ENCODE measurements at regions of chr6 and their contacts with region 1.

Region 1: GRCh38 chr6:3410385-3411360 is 46.2 kb downstream of the SLC22A23 start:
- DNase-seq: peak in 1 of 2 experiments; percentile 92
- H3K4me3 ChIP-seq: no peak overlapping the region
- H3K27ac ChIP-seq: no peak overlapping the region
- H3K4me1 ChIP-seq: peaks cover 0 to 19% (median 16%) of the 10 kb centered on the region in 4 experiments; a peak in 6 of 7 replicates
- H3K27me3 ChIP-seq: no peaks in the 10 kb centered on the region
- CTCF ChIP-seq: peak; percentile 84 to 95 (median 84)
- EP300 ChIP-seq: no peak
- POLR2A ChIP-seq: no peak
- RAD21 ChIP-seq: peak; percentile 83 to 88

Region 2: DNA sequence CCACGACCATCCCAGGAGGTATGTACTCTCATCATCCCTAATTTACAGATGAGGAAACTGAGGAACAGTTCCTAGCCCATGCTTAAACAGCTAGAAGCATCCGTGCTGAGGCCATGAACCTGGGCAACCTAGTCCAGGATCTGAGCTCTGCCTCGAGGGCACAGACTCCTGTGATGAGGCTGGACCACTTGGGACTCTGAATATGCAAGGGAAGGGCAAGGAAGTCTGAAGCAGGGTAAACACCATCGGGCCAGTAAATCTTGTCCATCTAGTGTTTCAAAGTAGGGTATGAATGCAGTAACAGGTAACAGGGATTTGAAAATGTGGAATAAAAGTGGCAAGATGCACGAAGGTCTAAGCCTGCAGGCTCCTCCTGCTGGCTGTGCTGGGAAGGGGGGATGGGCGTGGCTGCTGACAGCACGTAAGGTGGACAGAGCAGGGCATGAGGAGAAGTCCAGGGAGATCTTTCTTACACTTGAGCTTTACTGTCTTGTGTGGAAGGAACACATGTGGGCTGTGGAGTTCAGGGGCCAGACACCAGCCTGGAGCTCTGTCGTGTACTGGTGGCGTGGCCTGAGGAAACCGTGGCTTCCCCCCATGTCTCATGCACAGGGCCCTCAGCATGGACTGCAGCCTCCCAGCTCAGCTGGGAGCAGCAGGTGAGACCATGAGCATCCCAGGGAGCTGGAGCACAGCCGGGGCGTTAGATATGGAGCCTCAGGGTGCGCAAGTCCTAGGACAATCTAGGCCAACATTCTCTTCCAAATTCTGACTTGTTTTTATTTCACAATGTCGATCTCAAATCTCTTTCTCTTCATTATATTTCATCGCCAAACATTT is 38.4 kb before region 1 on chr6:
- CTCF ChIA-PET with region 1: interaction called, 15 read pairs
- POLR2A ChIA-PET with region 1: no interaction called
- DNase-seq: no peak
- H3K4me3 ChIP-seq: no peak overlapping the region
- H3K27ac ChIP-seq: no peak overlapping the region
- H3K4me1 ChIP-seq: peaks cover 0 to 5% (median 3%) of the 10 kb centered on the region in 4 experiments; a peak in 4 of 7 replicates
- H3K27me3 ChIP-seq: peaks cover 0 to 2% (median 0%) of the 10 kb centered on the region in 4 experiments; a peak in 1 of 7 replicates
- CTCF ChIP-seq: peak; percentile 31 to 67 (median 60)
- EP300 ChIP-seq: no peak
- POLR2A ChIP-seq: no peak
- RAD21 ChIP-seq: peak; percentile 46 to 49

Region 3: GRCh38 chr6:3421791-3422434 is 11.2 kb after region 1 on chr6:
- CTCF ChIA-PET with region 1: interaction called, 23 read pairs
- POLR2A ChIA-PET with region 1: interaction called, 3 read pairs
- DNase-seq: no peak
- H3K4me3 ChIP-seq: no peak overlapping the region
- H3K27ac ChIP-seq: peak overlapping the region; percentile 35; the same call in 1 of the 2 replicates
- H3K4me1 ChIP-seq: peaks cover 31 to 57% (median 43%) of the 10 kb centered on the region in 4 experiments
- H3K27me3 ChIP-seq: no peaks in the 10 kb centered on the region
- CTCF ChIP-seq: no peak
- EP300 ChIP-seq: no peak
- POLR2A ChIP-seq: no peak
- RAD21 ChIP-seq: no peak

Region 4: DNA sequence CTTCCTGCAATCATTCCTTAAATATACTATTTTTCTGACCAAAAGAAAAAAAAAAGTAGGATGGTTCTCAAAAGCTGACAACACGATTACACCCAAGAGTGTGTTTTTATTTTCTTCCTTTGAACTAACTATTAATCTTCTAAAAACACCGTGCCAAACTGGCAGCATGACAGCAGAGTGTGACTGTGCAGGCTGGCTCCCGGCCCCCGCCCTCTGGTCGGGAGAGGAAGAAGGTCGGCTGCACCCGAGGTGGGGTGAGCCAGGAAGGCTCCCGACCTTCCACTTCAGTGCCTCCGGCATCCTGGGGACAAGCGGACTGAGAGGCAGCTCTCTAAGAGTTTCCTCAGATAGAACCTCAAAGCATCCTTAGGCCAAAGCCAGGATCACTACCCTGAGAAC is 17.0 kb after region 1 on chr6:
- CTCF ChIA-PET with region 1: interaction called, 23 read pairs
- POLR2A ChIA-PET with region 1: interaction called, 3 read pairs
- DNase-seq: no peak
- H3K4me3 ChIP-seq: no peak overlapping the region
- H3K27ac ChIP-seq: no peak overlapping the region
- H3K4me1 ChIP-seq: peaks cover 16 to 29% (median 24%) of the 10 kb centered on the region in 4 experiments
- H3K27me3 ChIP-seq: no peaks in the 10 kb centered on the region
- CTCF ChIP-seq: no peak
- EP300 ChIP-seq: no peak
- POLR2A ChIP-seq: no peak
- RAD21 ChIP-seq: no peak

Region 5: DNA sequence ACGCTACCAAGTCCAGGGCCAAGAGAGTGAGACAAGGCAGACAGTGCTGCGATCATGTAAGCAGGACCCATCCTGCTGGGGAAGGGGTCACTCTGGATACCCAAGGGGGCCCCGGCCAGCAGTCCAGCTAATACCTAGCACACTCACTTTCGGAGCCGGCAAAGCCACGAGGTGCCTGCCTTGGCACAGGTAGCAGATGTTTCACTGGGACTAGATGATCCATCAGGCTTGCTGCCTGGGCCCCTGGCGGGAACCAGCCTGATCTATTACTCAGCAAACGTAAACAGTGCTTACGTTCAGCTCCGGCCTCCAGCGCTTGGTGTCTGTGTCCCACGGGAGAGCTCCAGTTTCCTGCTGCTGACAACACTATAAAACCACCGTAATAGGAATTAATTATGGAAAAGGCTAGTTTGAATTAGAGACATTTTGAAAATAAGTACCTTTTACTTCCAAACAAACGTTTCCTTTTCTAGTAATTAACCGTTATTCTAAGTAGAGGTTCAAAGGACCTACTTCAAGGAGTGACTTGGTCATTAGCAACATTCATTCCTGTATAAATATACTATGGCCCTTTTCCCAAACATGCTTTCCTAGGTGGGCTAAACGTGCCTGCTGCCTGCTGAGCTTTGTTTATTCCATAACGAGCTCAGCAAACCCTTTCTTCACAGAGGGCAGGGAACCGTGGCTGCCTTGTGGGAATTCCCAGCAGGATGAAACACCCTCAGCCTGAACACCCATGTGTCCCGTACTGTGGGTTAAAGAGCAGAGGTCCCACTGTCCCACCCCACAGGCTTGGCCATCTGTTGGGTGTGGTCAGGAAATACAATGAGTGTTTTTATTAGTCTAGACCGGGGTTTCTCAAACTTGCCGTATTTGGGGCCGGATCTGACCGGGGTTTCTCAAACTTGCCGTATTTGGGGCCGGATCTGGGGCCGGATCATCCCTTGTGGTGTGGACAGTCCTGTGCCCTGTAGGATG is 27.8 kb after region 1 on chr6:
- CTCF ChIA-PET with region 1: interaction called, 31 read pairs
- POLR2A ChIA-PET with region 1: no interaction called
- DNase-seq: no peak
- H3K4me3 ChIP-seq: no peak overlapping the region
- H3K27ac ChIP-seq: no peak overlapping the region; the same call in 1 of the 2 replicates
- H3K4me1 ChIP-seq: peaks cover 0 to 4% (median 0%) of the 10 kb centered on the region in 4 experiments; a peak in 2 of 7 replicates
- H3K27me3 ChIP-seq: no peaks in the 10 kb centered on the region
- CTCF ChIP-seq: no peak
- EP300 ChIP-seq: no peak
- POLR2A ChIP-seq: no peak
- RAD21 ChIP-seq: no peak

Region 6: DNA sequence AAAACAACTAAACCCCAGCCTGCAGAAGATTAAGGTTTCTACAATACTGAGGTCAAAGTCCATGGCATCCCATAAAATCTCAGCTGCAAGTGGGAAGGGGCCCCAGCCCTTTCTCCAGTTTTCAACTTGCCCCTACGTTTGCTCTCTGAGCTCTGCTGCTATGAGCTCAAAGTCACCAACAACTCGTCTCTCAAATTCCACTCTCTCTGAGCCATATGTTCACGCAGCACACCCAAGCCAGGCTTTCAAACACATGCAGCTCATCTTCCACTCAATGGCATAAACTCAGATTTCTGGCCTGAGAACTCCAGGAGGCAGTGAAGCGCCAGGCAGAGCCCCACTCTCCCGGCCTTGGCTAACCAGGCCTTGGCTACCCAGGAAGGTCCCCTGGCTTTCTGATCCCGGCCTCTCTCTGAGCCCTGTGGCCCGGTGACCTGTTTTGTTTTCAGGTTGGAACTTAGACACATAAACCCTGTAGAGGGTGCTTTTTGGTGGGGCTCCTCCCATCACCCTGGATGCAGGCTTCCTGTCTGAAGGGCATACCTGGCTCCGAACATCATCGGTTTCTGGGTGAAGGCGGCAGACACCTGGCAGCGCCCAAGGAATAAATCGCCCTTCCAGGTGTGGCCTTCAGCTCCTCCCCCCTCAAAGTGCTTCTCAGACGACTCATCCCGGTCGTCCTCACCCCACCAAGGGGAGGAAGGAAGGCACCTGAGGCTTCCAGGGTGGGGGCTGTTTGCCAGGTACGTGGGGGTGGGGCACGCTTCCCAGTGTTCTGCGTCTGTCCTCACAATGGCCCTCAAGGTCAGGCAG is 33.8 kb after region 1 on chr6:
- CTCF ChIA-PET with region 1: interaction called, 31 read pairs
- POLR2A ChIA-PET with region 1: no interaction called
- DNase-seq: peak in 1 of 2 experiments; percentile 27
- H3K4me3 ChIP-seq: no peak overlapping the region
- H3K27ac ChIP-seq: no peak overlapping the region; the same call in 1 of the 2 replicates
- H3K4me1 ChIP-seq: peaks cover 2 to 10% (median 8%) of the 10 kb centered on the region in 4 experiments; a peak in 6 of 7 replicates
- H3K27me3 ChIP-seq: no peaks in the 10 kb centered on the region
- CTCF ChIP-seq: no peak
- EP300 ChIP-seq: no peak
- POLR2A ChIP-seq: no peak
- RAD21 ChIP-seq: 0 out of 4 replicates have a peak, but pooled peaks of 1 of the 2 experiments have one; percentile 8

Region 7: GRCh38 chr6:3456755-3457466 is 46.2 kb after region 1 on chr6 and contains the start of gene SLC22A23:
- CTCF ChIA-PET with region 1: interaction called, 64 read pairs
- POLR2A ChIA-PET with region 1: no interaction called
- DNase-seq: peak; percentile 17 to 86
- H3K4me3 ChIP-seq: peak within 1 kb of the TSS; percentile 57 to 72 (median 64)
- H3K27ac ChIP-seq: no peak within 1 kb of the TSS
- H3K4me1 ChIP-seq: peaks cover 7 to 27% (median 23%) of the 10 kb centered on the region in 4 experiments
- H3K27me3 ChIP-seq: peaks cover 2 to 25% (median 13%) of the 10 kb centered on the region in 4 experiments; a peak in 6 of 7 replicates
- CTCF ChIP-seq: peak; percentile 52 to 74 (median 67)
- EP300 ChIP-seq: no peak
- POLR2A ChIP-seq: no peak
- RAD21 ChIP-seq: peak; percentile 30 to 61
- total RNA-seq, gene SLC22A23: 37.1 and 38.4 TPM in 2 replicates

Measured in H1 (cell line).